Pancreas (tissue), 10 donors: ENCODE measurements at regions of chr7 and their contacts with region 1.

Region 1: GRCh38 chr7:36084475-36085097 is 68.5 kb upstream of the EEPD1 start:
- DNase-seq: peak; percentile 76 to 91 (median 80)
- ATAC-seq: peak; percentile 94 to 99 (median 98)
- H3K4me3 ChIP-seq: no peak overlapping the region
- H3K27ac ChIP-seq: no peak overlapping the region
- H3K4me1 ChIP-seq: no peaks in the 10 kb centered on the region
- H3K27me3 ChIP-seq: no peaks in the 10 kb centered on the region
- CTCF ChIP-seq: peak in 2 of 4 donors; percentile 24 to 26

Region 2: DNA sequence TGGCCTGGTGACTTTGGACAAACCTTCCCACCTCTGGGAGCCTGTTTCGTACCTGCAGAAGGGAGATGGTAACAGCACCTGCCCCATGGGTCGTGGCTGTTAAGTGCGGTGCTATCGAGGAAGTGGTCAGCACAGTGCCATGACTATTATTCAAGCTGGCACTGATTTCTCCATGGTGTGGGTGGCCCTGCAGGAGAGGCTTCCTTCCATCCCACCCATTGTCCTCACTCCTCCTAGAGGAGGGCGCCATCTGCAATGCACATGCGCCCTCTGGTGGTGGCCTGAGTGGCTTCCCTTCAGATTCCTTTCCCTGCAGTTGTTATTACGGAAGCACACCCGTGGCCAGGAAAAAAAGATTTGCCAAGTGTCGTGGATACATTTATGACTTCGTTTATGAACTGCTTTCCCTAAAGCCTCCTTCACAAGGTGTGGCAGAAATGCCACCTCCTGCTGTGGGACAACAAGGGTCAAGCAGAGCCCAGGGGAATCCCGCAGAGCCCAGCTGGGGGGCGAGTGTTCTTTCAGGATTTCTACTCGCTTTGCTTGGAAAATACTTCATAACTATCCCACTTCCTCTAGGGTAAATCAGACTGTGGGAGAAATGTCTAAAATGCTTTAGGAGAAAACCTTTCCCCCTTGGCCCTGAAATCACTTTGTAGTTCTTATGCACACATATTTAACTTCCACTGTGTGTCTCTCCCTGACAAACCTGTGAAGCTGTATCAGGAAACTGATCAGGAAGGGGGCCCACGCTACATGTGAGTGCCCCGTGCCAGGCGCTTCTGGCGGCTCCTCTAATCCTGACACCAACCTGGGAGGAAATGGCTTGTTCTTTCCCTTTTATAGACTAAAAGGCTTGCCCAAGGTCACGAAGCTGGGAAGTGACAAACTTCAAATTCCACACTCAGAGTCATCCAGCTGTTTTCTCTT is 207.1 kb after region 1 on chr7:
- intact Hi-C with region 1: loop called in 1 of 3 experiments (anchors 5 kb)
- DNase-seq: peak; percentile 82 to 94 (median 88)
- ATAC-seq: peak; percentile 77 to 90 (median 83)
- H3K4me3 ChIP-seq: peak overlapping the region in 2 of 4 donors; percentile 28 to 30
- H3K27ac ChIP-seq: peak overlapping the region; percentile 80 to 96 (median 92)
- H3K4me1 ChIP-seq: peaks cover 32 to 34% (median 33%) of the 10 kb centered on the region in 3 donors
- H3K27me3 ChIP-seq: no peaks in the 10 kb centered on the region
- CTCF ChIP-seq: peak; percentile 85 to 97 (median 96)